ENCODE measurements at regions of chr5 and their contacts with region 1.

Region 1: GRCh38 chr5:96614110-96614691 is 48.0 kb upstream of the CAST start:
- DNase-seq: peak; percentile 66

Region 2: GRCh38 chr5:96601811-96602244 is 12.4 kb before region 1 on chr5:
- CTCF ChIA-PET with region 1: interaction called, 17 read pairs
- POLR2A ChIA-PET with region 1: no interaction called
- DNase-seq: peak; percentile 69

Region 3: GRCh38 chr5:96626956-96627355 is 12.8 kb after region 1 on chr5:
- CTCF ChIA-PET with region 1: no interaction called
- POLR2A ChIA-PET with region 1: no interaction called
- DNase-seq: no peak

Region 4: DNA sequence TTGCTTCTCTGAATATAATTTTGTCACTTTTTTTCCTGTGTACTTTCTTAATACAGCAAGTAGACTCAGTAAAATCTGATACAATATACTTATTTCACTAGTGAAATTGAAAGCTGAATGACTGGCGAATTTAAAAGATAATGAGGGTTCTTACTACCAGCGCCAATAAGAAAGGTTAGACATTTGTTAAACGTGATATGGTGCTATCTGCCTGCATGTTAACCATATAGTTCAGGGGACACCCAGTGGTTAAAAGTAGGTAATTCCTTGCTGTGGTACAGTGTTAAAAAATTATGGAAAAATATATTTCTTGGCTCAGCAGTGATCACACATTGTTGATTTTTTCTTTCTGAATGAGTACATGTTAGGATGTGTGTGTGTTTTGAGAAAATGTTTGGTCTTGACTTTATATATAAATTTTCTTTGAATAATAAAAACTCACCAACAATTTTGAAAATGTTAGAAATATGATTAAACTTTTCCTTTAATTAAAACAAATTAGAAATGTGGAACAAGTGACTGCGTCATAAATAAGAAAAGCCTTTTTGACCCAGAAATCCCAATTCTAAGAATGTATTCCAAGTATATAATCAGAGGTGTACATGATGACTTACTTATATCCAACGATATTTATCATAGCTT is 73.7 kb after region 1 on chr5:
- CTCF ChIA-PET with region 1: interaction called, 18 read pairs
- POLR2A ChIA-PET with region 1: no interaction called
- DNase-seq: peak; percentile 53